Aorta (tissue), 5 donors: ENCODE measurements at regions of chr2 and their contacts with region 1.

Region 1: DNA sequence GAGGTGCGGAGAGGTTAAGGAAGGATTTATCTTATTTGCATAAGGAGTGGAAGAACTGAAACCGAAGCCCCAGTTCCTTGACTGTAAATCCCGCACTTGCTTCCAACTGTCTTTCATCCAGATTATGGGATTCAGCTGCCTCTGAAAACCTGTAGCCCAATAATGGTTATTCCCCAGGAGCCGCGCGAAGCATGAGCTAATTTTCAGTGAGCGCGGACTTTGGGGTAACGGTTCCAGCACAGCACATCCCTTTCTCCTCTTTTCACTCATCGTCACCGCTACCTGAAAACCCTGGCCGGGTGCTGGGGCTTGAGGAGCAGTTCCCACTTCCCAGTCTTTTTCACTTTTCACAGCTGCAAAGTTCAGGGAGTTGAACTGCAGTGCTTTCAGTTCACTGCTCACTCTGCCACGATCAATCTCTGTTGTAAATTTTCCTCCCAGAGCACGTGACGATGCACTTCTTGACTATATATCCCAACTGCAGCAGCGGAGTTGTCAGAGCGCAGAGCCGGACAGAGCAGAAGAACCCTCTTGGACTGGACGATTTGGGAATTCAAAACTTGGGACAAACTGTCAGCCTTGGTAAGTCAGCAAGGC is at the start of gene KCNE4:
- DNase-seq: no peak
- ATAC-seq: peak; percentile 28
- H3K4me3 ChIP-seq: peak within 1 kb of the TSS; percentile 71 to 96
- H3K27ac ChIP-seq: peak within 1 kb of the TSS; percentile 92 to 96
- H3K4me1 ChIP-seq: peaks cover 5 to 16% of the 10 kb centered on the region in 2 donors
- H3K27me3 ChIP-seq: no peaks in the 10 kb centered on the region
- total RNA-seq, gene KCNE4: 10.9 to 21.5 TPM

Region 2: GRCh38 chr2:222714361-222715241 is 337.2 kb before region 1 on chr2:
- intact Hi-C with region 1: loop called in 1 of 2 experiments (anchors 10 kb)
- DNase-seq: no peak
- ATAC-seq: peak; percentile 68
- H3K4me3 ChIP-seq: no peak overlapping the region
- H3K27ac ChIP-seq: peak overlapping the region; percentile 95 to 99
- H3K4me1 ChIP-seq: peaks cover 9 to 15% of the 10 kb centered on the region in 2 donors
- H3K27me3 ChIP-seq: no peaks in the 10 kb centered on the region

Region 3: GRCh38 chr2:222993920-222994650 is 57.7 kb before region 1 on chr2:
- intact Hi-C with region 1: loop called (anchors 2 to 5 kb)
- DNase-seq: peak; percentile 84 to 92
- ATAC-seq: peak; percentile 95
- H3K4me3 ChIP-seq: peak overlapping the region in 1 of 2 donors; percentile 54
- H3K27ac ChIP-seq: peak overlapping the region; percentile 28 to 100
- H3K4me1 ChIP-seq: peaks cover 3 to 8% of the 10 kb centered on the region in 2 donors
- H3K27me3 ChIP-seq: no peaks in the 10 kb centered on the region

Region 4: DNA sequence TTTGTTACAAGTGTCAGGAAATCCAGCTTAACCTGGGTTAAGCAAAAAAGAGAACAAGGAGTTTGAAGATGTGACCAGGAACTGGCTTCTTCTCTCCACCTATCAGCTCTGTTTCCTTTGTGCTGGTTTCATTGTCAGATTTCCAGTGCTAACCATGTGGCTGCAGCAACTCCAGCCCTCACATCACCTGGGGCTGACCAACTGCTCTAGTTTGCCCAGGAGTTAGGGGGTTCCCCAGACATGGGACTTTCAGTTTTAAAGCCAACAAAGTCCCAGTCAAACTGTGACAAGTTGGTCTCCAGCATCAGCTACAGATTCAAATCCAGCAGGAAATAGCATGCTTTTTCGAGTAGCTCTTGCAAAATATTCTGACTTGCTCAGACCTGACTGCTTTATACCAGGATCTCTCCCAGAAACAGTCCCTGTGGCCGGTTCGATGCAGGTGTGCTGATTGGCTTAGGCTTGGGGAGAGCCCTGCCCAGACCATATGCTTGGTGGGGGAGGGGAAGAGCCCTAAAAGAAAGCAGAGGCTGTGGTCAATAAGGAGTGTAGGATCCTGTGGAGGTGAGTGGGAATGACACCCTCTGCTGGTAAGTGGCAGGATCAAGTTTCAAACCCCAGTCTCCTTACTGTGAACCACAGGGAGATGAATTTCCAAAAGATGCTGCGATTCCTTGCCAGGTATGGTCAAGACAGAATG is 49.7 kb after region 1 on chr2:
- intact Hi-C with region 1: loop called in 1 of 2 experiments (anchors 5 kb)
- DNase-seq: no peak
- ATAC-seq: peak; percentile 45
- H3K4me3 ChIP-seq: no peak overlapping the region
- H3K27ac ChIP-seq: no peak overlapping the region
- H3K4me1 ChIP-seq: no peaks in the 10 kb centered on the region
- H3K27me3 ChIP-seq: no peaks in the 10 kb centered on the region

Region 5: GRCh38 chr2:223465793-223466192 is 414.0 kb after region 1 on chr2:
- intact Hi-C with region 1: loop called in 1 of 2 experiments (anchors 10 kb)
- DNase-seq: peak; percentile 90 to 92
- ATAC-seq: peak; percentile 93
- H3K4me3 ChIP-seq: no peak overlapping the region
- H3K27ac ChIP-seq: no peak overlapping the region
- H3K4me1 ChIP-seq: peaks cover 0 to 3% of the 10 kb centered on the region in 2 donors
- H3K27me3 ChIP-seq: no peaks in the 10 kb centered on the region